ENCODE measurements at regions of chr1 and their contacts with region 1.

Region 1: DNA sequence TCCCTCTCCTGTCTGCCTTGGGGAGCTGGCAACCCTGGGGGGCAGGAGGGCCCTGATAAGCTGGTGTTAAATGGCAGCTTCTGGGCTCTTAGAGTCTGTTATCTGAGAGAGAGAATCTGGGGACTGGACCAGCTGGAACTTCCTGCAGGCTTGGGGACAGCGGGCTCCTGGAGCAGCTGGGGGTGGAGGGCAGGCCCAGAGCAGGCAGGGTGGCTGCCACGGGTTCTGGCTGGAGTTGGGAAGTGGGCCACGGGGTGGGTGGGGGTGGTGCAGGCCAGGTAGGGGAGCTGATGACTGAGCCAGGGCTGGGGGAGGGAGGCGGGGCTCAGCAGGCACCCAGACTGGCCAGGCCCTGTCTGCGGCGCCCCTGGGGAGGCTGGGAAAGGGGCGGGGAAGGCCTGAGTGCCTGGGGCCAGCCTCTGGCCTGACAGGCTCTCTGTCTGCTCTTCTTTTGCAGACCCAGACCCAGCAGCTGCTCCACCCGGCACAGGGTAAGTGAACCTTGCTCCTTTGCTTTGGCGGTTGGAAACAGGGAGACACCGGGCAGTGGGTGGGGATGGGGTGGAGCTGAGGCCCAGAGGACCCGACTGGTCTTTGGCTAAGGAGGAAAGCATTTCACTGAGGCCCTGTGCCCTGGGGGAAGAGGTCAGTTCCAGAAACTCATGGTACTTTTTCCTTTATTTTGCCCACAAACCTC is 48.6 kb downstream of the ARHGEF10L start:
- DNase-seq: peak; percentile 77 to 87
- ATAC-seq: peak; percentile 74
- H3K4me3 ChIP-seq: no peak overlapping the region
- H3K27ac ChIP-seq: peak overlapping the region; percentile 64 to 93
- H3K4me1 ChIP-seq: peaks cover 0 to 2% of the 10 kb centered on the region in 2 donors
- H3K27me3 ChIP-seq: no peaks in the 10 kb centered on the region

Region 2: GRCh38 chr1:17348125-17348979 is 239.8 kb before region 1 on chr1:
- intact Hi-C with region 1: no loop called
- DNase-seq: peak; percentile 17 to 55
- ATAC-seq: no peak
- H3K4me3 ChIP-seq: no peak overlapping the region
- H3K27ac ChIP-seq: no peak overlapping the region
- H3K4me1 ChIP-seq: no peaks in the 10 kb centered on the region
- H3K27me3 ChIP-seq: no peaks in the 10 kb centered on the region

Region 3: GRCh38 chr1:17494114-17494729 is 93.9 kb before region 1 on chr1:
- intact Hi-C with region 1: no loop called
- DNase-seq: peak; percentile 73 to 93
- ATAC-seq: peak; percentile 76
- H3K4me3 ChIP-seq: no peak overlapping the region
- H3K27ac ChIP-seq: no peak overlapping the region
- H3K4me1 ChIP-seq: no peaks in the 10 kb centered on the region
- H3K27me3 ChIP-seq: no peaks in the 10 kb centered on the region

Region 4: DNA sequence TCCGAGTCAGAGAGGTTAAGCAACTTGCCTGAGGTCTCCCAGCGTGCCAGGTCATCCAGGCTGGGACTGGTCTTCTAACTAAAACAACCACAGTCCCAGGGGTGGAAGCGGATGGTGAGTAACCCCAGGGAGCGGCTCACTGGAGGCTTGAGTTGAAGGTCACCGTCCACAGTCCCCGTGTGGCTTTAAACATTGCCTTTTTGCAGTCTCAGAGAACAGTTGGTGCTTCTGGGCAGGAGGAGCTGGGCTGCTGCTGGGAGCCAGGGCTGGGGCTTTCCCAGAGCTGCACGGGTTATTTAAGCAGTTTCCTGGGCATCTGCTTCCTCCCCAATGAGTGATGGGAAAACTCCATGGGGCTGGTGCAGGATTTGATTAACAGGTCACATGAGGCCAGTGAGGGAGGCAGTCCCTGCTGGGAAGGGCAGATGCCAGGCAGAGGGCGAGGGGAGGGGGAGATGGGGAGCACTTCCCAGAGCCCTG is 36.3 kb before region 1 on chr1:
- intact Hi-C with region 1: loop called in 1 of 2 experiments (anchors 5 kb)
- DNase-seq: peak; percentile 82 to 86
- ATAC-seq: peak; percentile 75
- H3K4me3 ChIP-seq: no peak overlapping the region
- H3K27ac ChIP-seq: peak overlapping the region in 1 of 2 donors; percentile 84
- H3K4me1 ChIP-seq: peaks cover 0 to 5% of the 10 kb centered on the region in 2 donors
- H3K27me3 ChIP-seq: no peaks in the 10 kb centered on the region

Region 5: DNA sequence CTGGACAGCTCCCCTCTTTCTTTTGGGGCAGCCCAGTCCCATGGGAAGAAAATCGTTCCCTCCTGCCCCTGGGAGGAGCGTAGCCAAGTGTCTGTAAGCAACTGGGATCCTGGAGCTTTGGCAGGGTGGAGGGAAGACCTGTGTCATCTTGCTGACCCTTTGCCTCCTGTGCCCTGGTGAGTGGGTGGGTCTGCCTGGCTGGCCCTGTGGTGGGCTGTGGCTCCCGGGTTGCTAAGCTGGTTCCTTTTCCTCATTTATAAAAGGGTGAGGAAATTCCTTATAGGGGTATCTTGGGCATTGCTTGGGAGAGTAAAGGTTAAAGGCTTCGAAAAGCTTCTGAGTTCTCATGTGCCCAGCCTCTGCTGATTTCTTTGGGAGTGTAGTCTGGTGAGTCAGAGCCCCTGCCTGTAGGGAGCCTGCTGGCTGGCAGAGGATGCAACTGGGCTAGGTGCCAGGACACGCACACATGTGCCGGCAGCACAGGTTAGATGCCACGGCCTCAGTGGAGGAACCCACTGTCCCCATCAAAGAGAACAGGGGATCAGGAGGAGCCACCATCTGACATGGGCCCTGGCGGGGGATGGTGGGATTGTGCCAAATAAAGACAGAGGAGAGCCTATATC is 36.6 kb after region 1 on chr1:
- intact Hi-C with region 1: loop called in 1 of 2 experiments (anchors 5 kb)
- DNase-seq: peak; percentile 87 to 95
- ATAC-seq: peak; percentile 59
- H3K4me3 ChIP-seq: no peak overlapping the region
- H3K27ac ChIP-seq: peak overlapping the region; percentile 40 to 85
- H3K4me1 ChIP-seq: no peaks in the 10 kb centered on the region
- H3K27me3 ChIP-seq: no peaks in the 10 kb centered on the region